Aorta (tissue), 5 donors: ENCODE measurements at regions of chrX and their contacts with region 1.

Region 1: GRCh38 chrX:74421036-74421739 is at the start of gene SLC16A2:
- DNase-seq: peak; percentile 81 to 83
- ATAC-seq: peak; percentile 79
- H3K4me3 ChIP-seq: peak within 1 kb of the TSS; percentile 43 to 63
- H3K27ac ChIP-seq: peak within 1 kb of the TSS in 1 of 2 donors; percentile 93
- H3K4me1 ChIP-seq: no peaks in the 10 kb centered on the region
- H3K27me3 ChIP-seq: no peaks in the 10 kb centered on the region
- total RNA-seq, gene SLC16A2: 9.2 to 30.6 TPM

Region 2: GRCh38 chrX:74080165-74080564 is 341.0 kb before region 1 on chrX:
- intact Hi-C with region 1: no loop called
- DNase-seq: no peak
- ATAC-seq: no peak
- H3K4me3 ChIP-seq: no peak overlapping the region
- H3K27ac ChIP-seq: no peak overlapping the region
- H3K4me1 ChIP-seq: no peaks in the 10 kb centered on the region
- H3K27me3 ChIP-seq: no peaks in the 10 kb centered on the region

Region 3: GRCh38 chrX:74291964-74292807 is 129.0 kb before region 1 on chrX:
- intact Hi-C with region 1: loop called in 1 of 2 experiments (anchors 10 kb)
- DNase-seq: peak; percentile 93
- ATAC-seq: peak; percentile 93
- H3K4me3 ChIP-seq: peak overlapping the region; percentile 72 to 96
- H3K27ac ChIP-seq: peak overlapping the region; percentile 88 to 93
- H3K4me1 ChIP-seq: no peaks in the 10 kb centered on the region
- H3K27me3 ChIP-seq: no peaks in the 10 kb centered on the region

Region 4: GRCh38 chrX:74536152-74536831 is 115.1 kb after region 1 on chrX:
- intact Hi-C with region 1: loop called (anchors 2 to 5 kb)
- DNase-seq: peak; percentile 94 to 95
- ATAC-seq: peak; percentile 90
- H3K4me3 ChIP-seq: peak overlapping the region in 1 of 2 donors; percentile 49
- H3K27ac ChIP-seq: peak overlapping the region in 1 of 2 donors; percentile 83
- H3K4me1 ChIP-seq: no peaks in the 10 kb centered on the region
- H3K27me3 ChIP-seq: no peaks in the 10 kb centered on the region